PC-9 (cell line): ENCODE measurements at regions of chr20 and their contacts with region 1.

Region 1: GRCh38 chr20:47785854-47786764 is 828 bp upstream of the SULF2 start:
- DNase-seq: peak; percentile 77 to 87
- H3K4me3 ChIP-seq: peak overlapping the region; percentile 84
- H3K27ac ChIP-seq: peak overlapping the region; percentile 94
- H3K4me1 ChIP-seq: peaks cover 67% of the 10 kb centered on the region
- H3K27me3 ChIP-seq: no peaks in the 10 kb centered on the region
- CTCF ChIP-seq: peak; percentile 88

Region 2: DNA sequence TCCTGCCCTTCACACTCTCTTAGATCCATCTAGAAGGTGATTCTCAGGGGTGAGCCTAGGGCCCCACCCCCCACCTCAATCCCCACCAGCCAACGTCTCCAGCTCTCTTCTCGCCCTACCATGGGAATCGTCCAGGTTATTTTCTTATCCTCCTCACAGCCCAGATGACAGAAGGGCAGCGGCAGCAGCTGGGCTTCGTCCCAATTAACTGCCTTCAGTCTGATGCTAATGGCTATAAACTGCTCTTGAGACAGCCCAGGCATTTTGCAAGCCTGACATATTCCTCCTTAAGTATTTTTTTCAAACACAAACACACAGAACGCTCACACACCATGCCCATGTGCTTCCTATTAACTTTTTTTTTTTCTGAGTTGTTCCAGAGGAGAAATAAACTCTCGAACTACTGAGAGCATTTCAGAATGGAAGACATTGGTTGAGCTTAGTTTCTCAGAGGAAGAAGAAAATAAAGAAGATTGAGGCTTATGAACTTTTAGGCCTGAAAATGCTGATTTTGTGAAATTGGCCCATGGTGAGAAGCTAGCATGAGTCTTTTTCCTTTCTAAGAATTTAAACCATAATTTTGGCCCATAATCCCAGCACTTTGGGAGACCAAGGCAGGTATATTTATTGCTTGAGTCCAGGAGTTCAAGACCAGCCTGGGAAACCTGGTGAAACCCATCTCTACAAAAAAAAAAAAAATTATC is 766.8 kb before region 1 on chr20:
- CTCF ChIA-PET with region 1: no interaction called
- POLR2A ChIA-PET with region 1: no interaction called
- intact Hi-C with region 1: no loop called
- DNase-seq: no peak
- H3K4me3 ChIP-seq: no peak overlapping the region
- H3K27ac ChIP-seq: no peak overlapping the region
- H3K4me1 ChIP-seq: no peaks in the 10 kb centered on the region
- H3K27me3 ChIP-seq: peaks cover 67% of the 10 kb centered on the region
- CTCF ChIP-seq: no peak

Region 3: GRCh38 chr20:47677635-47678453 is 108.3 kb before region 1 on chr20:
- CTCF ChIA-PET with region 1: no interaction called
- POLR2A ChIA-PET with region 1: no interaction called
- intact Hi-C with region 1: loop called (anchors 5 kb)
- DNase-seq: peak in 1 of 2 experiments; percentile 77
- H3K4me3 ChIP-seq: no peak overlapping the region
- H3K27ac ChIP-seq: no peak overlapping the region
- H3K4me1 ChIP-seq: no peaks in the 10 kb centered on the region
- H3K27me3 ChIP-seq: no peaks in the 10 kb centered on the region
- CTCF ChIP-seq: peak; percentile 78

Region 4: DNA sequence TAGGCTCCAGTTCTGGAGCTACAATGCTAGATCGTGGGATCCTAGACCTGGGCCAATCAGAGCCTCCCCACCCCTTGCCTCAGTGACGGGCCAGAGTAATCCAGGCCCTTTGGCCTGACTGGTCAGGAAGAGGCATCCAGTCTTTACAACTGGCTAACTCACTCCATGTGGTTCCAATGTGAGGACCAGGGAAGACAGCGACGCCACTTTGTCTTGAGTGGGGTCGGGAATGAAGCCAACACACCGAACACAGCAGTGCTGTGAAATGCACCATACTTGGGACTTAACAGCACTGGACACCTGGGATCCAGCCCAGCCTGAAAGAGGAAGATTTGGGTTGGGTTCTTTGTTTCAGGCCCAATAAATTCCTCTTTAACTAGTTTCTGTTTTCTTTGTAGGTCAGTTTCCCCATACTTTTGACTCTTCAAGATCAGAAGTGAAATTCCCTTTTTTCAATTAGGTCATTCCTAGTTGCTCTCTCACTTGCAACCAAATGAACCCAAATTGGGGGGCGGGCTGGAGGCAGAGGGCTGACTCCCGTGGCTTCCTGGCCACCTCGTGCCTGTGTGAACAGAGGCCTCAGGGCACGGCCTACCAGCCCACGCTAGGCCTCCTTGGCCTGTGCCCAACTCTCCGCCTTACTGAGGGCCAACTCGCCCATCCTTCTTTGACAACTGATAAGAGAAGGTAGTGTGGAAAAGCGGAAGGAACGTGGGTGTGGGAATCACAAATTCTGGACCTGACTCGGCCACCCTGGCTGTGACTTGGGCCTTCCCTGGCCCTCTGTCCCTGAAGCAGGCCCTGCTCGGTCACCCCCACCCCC is 17.9 kb before region 1 on chr20:
- CTCF ChIA-PET with region 1: no interaction called
- POLR2A ChIA-PET with region 1: no interaction called
- intact Hi-C with region 1: no loop called
- DNase-seq: no peak
- H3K4me3 ChIP-seq: no peak overlapping the region
- H3K27ac ChIP-seq: no peak overlapping the region
- H3K4me1 ChIP-seq: 0 out of 2 replicates have a peak, but pooled peaks cover 5% of the 10 kb centered on the region
- H3K27me3 ChIP-seq: no peaks in the 10 kb centered on the region
- CTCF ChIP-seq: no peak

Region 5: GRCh38 chr20:47818996-47819609 is 33.0 kb after region 1 on chr20:
- CTCF ChIA-PET with region 1: no interaction called
- POLR2A ChIA-PET with region 1: no interaction called
- intact Hi-C with region 1: loop called (anchors 2 kb)
- DNase-seq: no peak
- H3K4me3 ChIP-seq: no peak overlapping the region
- H3K27ac ChIP-seq: peak overlapping the region; percentile 88
- H3K4me1 ChIP-seq: peaks cover 76% of the 10 kb centered on the region
- H3K27me3 ChIP-seq: no peaks in the 10 kb centered on the region
- CTCF ChIP-seq: no peak

Region 6: DNA sequence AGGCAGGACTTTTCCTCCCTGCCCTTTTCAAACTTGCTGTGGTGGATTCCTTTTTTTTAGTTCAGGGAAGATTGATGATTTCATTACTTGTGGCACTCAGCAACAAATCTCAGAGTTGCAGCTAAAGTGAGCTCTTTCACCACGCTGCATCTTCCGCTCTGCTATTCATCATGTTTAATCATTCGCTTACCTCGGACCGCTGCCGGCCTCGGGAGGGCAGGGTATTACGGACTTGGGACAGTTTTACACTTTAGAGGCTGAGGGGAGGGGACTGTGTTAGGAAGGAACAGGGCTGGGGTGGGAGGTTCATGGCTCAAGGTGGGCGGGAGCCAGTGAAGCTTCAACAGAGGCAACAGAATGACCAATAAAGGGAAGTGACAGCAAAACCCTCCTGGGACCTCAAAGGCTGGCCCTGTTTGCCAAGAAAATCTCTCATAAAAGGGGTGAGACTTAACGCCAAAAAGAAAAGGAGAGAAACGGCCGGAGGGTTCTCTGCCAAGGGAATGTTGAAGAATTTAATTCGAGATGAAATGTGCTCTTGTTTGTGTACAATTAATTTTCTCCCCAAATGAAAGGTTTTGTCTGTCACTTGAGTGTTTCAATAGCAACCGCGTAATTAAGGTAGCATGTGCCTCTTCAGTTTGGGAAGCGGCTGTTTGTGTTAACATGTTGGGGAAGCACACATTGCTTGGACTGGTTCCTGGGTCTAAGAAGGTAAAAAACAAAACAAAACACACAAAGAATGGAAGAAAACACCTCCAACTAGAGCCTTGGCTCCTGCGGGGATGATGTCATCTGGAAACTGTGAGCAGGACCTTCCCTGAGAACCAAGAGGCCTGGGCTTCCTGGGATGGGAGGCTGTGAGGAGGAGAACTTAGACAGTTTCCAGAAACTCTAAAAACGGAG is 71.7 kb after region 1 on chr20:
- CTCF ChIA-PET with region 1: interaction called, 3 read pairs
- POLR2A ChIA-PET with region 1: interaction called, 21 read pairs
- intact Hi-C with region 1: loop called (anchors 1 kb)
- DNase-seq: peak; percentile 70 to 76
- H3K4me3 ChIP-seq: peak overlapping the region; percentile 46
- H3K27ac ChIP-seq: peak overlapping the region; percentile 99
- H3K4me1 ChIP-seq: peaks cover 56% of the 10 kb centered on the region
- H3K27me3 ChIP-seq: no peaks in the 10 kb centered on the region
- CTCF ChIP-seq: 0 out of 2 replicates have a peak, but pooled peaks have one; percentile 14

Region 7: DNA sequence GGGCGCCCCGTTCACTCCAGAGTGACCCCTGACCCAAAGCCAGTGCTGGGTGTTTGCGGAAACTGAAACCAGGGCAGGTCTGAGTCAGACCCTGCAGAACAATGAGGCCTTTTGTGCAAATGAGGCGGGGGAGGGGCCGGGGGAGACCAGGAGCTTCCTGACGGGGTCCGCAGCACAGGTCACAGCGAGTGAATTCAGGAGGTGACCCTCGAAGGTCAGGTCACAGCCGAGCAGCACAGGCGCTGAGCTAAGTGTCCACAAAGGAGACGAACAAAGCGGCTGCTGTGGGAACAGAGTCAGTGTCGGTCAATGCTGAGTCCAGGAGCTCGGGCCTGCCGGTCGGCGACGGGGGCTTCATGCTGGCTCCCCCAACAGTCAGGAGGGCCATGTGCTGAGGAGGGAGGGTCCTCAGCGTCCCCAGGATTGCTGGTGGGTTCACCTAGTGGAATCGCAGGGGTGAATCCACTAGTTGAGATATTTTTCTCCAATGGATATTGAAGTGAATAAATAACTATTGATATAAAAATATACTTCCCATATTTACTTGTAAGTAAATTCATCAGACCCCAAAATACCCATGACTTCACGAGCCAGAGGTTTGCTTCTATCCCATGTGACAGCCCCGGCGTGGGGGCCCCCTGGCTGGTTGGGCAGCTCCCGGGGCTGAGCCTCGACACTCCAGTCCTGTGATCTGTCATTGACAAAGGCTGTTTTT is 187.6 kb after region 1 on chr20:
- CTCF ChIA-PET with region 1: no interaction called
- POLR2A ChIA-PET with region 1: no interaction called
- intact Hi-C with region 1: loop called (anchors 1 kb)
- DNase-seq: peak; percentile 86 to 95
- H3K4me3 ChIP-seq: peak overlapping the region; percentile 68
- H3K27ac ChIP-seq: peak overlapping the region; percentile 100
- H3K4me1 ChIP-seq: peaks cover 60% of the 10 kb centered on the region
- H3K27me3 ChIP-seq: no peaks in the 10 kb centered on the region
- CTCF ChIP-seq: no peak

Region 8: GRCh38 chr20:48012197-48013085 is 226.3 kb after region 1 on chr20:
- CTCF ChIA-PET with region 1: no interaction called
- POLR2A ChIA-PET with region 1: no interaction called
- intact Hi-C with region 1: loop called (anchors 1 kb)
- DNase-seq: peak; percentile 65 to 97
- H3K4me3 ChIP-seq: no peak overlapping the region
- H3K27ac ChIP-seq: peak overlapping the region; percentile 44
- H3K4me1 ChIP-seq: peaks cover 13% of the 10 kb centered on the region
- H3K27me3 ChIP-seq: no peaks in the 10 kb centered on the region
- CTCF ChIP-seq: peak; percentile 68

Region 9: DNA sequence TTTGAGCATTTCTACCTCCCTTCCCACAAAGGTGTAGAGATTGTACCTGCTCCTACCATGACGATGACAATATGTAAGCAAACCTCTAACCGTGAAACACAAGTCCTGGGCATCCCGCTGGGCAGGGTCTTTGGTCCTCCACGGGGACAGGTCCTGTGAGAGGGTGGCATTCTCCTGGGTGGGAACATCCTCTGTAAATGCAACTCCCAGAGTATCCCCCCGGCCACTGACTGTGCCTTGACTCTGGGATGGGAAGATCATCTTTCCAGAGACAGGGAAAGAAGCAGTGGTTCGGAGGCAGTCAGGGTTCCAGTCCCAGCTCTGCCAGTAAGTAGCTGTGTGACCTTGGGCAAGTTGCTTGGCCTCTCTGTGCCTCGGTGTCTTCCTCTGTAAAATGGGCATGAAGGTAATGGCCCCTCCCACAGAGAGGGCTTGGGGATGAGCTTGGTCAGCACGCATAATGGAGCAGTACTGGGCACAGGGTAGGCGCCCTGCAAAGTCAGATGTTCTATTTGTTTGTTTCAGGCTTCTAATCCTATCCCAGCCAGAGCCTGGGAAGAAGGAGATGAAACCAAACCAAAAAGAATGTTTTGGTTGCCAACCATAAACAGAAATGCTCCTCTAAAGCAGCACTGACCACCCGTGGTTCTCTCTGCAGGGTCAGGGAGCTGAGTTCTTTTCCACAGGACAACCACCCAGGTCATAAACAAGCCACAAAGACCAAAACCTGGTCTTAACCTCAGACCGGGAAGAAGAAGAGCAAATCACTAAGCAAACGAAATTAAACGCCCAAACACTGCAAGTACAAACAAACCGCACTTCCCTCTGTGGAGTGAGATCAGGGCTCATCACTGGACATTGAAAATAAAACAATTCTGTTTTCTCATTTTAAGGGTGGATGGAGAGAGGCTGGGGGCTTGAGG is 380.1 kb after region 1 on chr20:
- CTCF ChIA-PET with region 1: no interaction called
- POLR2A ChIA-PET with region 1: no interaction called
- intact Hi-C with region 1: no loop called
- DNase-seq: peak in 1 of 2 experiments; percentile 55
- H3K4me3 ChIP-seq: no peak overlapping the region
- H3K27ac ChIP-seq: no peak overlapping the region
- H3K4me1 ChIP-seq: peaks cover 37% of the 10 kb centered on the region
- H3K27me3 ChIP-seq: no peaks in the 10 kb centered on the region
- CTCF ChIP-seq: no peak

Region 10: DNA sequence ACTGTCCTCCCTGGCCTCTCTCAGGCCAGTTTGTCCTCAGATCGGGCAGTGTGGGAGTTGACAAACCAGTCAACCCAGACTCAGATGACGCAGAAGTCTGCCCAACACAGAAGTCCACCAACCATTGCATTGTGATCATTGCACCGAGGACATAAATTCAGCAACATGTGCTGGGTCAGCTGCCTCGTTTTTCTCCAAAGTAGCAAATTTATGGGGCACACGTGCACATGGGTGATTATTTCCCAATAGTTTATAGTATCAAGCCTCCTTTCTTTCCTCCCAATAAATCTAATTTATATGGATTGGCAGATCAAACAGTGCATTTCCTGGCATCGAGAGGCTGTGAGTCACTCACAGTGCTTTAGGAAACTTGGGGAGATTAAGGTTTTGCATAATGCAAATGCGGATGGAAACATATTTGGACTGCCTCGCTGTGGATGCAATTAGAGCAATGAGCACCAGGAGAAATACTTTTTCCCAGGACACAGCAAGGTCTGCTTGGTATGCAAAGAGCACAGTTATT is 412.9 kb after region 1 on chr20:
- CTCF ChIA-PET with region 1: no interaction called
- POLR2A ChIA-PET with region 1: no interaction called
- intact Hi-C with region 1: loop called (anchors 10 kb)
- DNase-seq: no peak
- H3K4me3 ChIP-seq: no peak overlapping the region
- H3K27ac ChIP-seq: no peak overlapping the region
- H3K4me1 ChIP-seq: no peaks in the 10 kb centered on the region
- H3K27me3 ChIP-seq: no peaks in the 10 kb centered on the region
- CTCF ChIP-seq: no peak

Region 11: GRCh38 chr20:48319960-48320584 is 534.0 kb after region 1 on chr20:
- CTCF ChIA-PET with region 1: no interaction called
- POLR2A ChIA-PET with region 1: no interaction called
- intact Hi-C with region 1: no loop called
- DNase-seq: no peak
- H3K4me3 ChIP-seq: no peak overlapping the region
- H3K27ac ChIP-seq: no peak overlapping the region
- H3K4me1 ChIP-seq: no peaks in the 10 kb centered on the region
- H3K27me3 ChIP-seq: no peaks in the 10 kb centered on the region
- CTCF ChIP-seq: no peak